Common myeloid progenitor, CD34-positive (primary cell): ENCODE measurements at regions of chr17 and their contacts with region 1.

Region 1: DNA sequence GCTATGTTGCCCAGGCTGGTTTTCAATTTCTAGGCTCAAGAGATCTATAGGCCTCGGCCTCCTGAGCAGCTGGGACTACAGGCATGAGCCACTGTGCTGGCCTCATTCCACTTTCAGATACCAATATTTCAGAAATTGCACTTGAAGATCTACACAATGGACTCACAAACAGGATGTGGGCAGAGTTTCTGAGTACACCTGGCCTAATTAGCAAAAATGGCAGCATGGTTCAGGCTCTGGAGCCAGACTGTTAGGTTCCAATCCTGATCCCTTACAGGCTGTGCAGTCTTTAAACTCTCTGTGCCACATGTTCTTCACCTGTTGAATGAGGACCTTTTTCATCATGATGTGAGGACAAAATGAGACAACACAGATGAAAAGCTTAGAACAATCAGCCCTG is 32.2 kb downstream of the RNF157 start:
- DNase-seq: no peak
- H3K4me3 ChIP-seq: no peak overlapping the region
- H3K27ac ChIP-seq: no peak overlapping the region
- H3K4me1 ChIP-seq: no peaks in the 10 kb centered on the region
- H3K27me3 ChIP-seq: no peaks in the 10 kb centered on the region

Region 2: GRCh38 chr17:75109407-75110233 is 1098.5 kb before region 1 on chr17 and contains the start of gene ARMC7:
- CTCF ChIA-PET with region 1: no interaction called
- POLR2A ChIA-PET with region 1: no interaction called
- DNase-seq: peak; percentile 79 to 82 (median 81)
- H3K4me3 ChIP-seq: peak within 1 kb of the TSS; percentile 51 to 95 (median 86)
- H3K27ac ChIP-seq: peak within 1 kb of the TSS in 1 of 2 experiments; percentile 74
- H3K4me1 ChIP-seq: peaks cover 0 to 41% (median 35%) of the 10 kb centered on the region in 4 experiments
- H3K27me3 ChIP-seq: no peaks in the 10 kb centered on the region

Region 3: GRCh38 chr17:76191896-76192295 is 16.2 kb before region 1 on chr17:
- CTCF ChIA-PET with region 1: interaction called, 11 read pairs
- POLR2A ChIA-PET with region 1: no interaction called
- DNase-seq: peak; percentile 12 to 84 (median 78)
- H3K4me3 ChIP-seq: peak overlapping the region in 3 of 7 experiments; percentile 4 to 20 (median 19)
- H3K27ac ChIP-seq: no peak overlapping the region
- H3K4me1 ChIP-seq: peaks cover 7 to 46% (median 16%) of the 10 kb centered on the region in 4 experiments
- H3K27me3 ChIP-seq: no peaks in the 10 kb centered on the region